MCF 10A (cell line): ENCODE measurements at regions of chr9 and their contacts with region 1.

Region 1: DNA sequence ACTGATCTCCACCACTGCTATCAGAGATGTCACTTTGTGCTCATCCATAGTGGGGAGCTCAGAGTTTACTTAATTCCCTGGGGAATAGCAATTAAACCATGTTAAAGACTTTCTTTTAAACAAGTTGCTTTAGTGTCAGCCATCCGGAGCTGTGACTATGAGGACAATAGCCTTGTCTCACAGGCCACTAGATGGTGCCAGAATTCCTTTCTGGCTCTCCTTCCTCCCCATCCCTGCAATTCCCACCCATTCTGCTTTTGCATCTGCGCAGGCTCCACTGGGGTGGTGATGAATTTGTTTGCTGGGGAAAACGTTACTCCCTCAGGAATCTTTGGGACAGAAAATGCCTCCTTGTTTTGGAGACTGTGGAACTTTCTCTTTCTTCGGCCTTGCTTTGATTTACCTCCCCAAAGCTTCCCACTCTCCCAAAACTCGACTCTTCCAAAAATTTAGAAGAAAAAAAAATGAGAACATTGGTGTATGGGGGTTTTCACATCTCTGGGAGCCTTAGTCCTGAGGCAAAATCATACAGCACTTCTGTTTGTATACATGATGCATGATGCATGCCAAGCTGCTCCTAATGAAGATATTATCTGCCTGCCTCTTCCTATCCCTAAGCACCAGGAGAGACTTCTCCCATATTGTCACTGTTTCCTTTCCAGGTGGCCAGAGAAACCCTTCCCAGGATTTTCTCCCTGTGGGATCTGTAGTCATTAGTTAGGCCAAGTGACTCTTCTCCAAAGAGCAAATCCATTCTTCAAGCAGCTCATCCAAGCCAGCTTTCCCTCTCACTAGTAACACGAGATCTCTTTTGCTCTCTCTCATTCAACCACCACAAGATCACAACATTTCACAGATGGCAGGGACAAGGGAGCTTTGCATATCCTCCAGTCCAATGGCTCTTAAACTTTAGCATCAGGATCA is 466.1 kb downstream of the TLR4 start:
- DNase-seq: peak; percentile 78
- H3K4me3 Mint-ChIP-seq: no peak overlapping the region
- H3K27ac Mint-ChIP-seq: no peak overlapping the region
- H3K4me1 Mint-ChIP-seq: no peaks in the 10 kb centered on the region
- H3K27me3 Mint-ChIP-seq: peaks cover 21% of the 10 kb centered on the region
- CTCF ChIP-seq: peak; percentile 73

Region 2: DNA sequence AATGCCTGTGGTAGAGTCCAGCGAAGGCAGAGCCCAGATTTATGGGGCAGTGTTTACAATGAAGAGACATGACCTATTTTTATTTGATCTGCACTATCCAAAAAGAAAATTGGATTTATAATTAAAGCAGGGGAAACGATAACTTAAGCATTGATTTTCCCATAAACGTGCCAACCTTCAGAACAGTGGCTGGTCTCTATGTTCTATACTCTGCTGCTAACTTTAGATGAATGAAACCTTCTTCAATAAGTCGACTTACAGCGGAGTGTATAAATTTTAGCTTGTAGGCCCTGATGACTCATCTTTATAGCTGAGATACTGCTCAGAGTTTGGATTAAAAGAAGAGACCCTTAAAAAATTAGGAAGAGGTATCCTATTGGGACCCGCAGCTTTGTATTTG is 13.4 kb before region 1 on chr9:
- CTCF ChIA-PET with region 1: interaction called, 29 read pairs
- POLR2A ChIA-PET with region 1: no interaction called
- intact Hi-C with region 1: no loop called
- DNase-seq: no peak
- H3K4me3 Mint-ChIP-seq: no peak overlapping the region
- H3K27ac Mint-ChIP-seq: no peak overlapping the region
- H3K4me1 Mint-ChIP-seq: no peaks in the 10 kb centered on the region
- H3K27me3 Mint-ChIP-seq: no peaks in the 10 kb centered on the region
- CTCF ChIP-seq: no peak

Region 3: DNA sequence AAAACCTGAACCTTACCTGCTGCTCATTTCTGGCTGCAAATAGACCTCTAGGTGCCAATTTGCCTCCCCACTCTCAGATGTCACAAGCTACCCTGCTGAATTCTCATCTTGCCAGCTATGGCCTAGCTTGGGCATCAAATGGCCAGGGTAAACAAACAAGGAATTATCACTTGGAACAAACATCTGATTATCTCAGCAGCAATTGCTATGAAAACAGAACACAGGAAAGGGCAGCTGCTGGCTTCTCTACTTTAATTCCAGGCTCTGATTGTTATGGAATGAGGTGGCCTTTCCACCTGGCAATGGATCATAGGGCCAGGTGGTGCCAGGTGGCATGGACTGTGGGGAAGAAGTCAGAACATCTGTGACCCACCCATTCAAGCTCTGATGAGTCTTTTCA is 39.0 kb after region 1 on chr9:
- CTCF ChIA-PET with region 1: no interaction called
- POLR2A ChIA-PET with region 1: no interaction called
- intact Hi-C with region 1: no loop called
- DNase-seq: no peak
- H3K4me3 Mint-ChIP-seq: no peak overlapping the region
- H3K27ac Mint-ChIP-seq: no peak overlapping the region
- H3K4me1 Mint-ChIP-seq: no peaks in the 10 kb centered on the region
- H3K27me3 Mint-ChIP-seq: no peaks in the 10 kb centered on the region
- CTCF ChIP-seq: no peak

Region 4: GRCh38 chr9:118362123-118362522 is 191.8 kb after region 1 on chr9:
- CTCF ChIA-PET with region 1: interaction called, 6 read pairs
- POLR2A ChIA-PET with region 1: no interaction called
- intact Hi-C with region 1: loop called (anchors 1 kb)
- DNase-seq: peak; percentile 57
- H3K4me3 Mint-ChIP-seq: no peak overlapping the region
- H3K27ac Mint-ChIP-seq: no peak overlapping the region
- H3K4me1 Mint-ChIP-seq: peaks cover 12% of the 10 kb centered on the region
- H3K27me3 Mint-ChIP-seq: no peaks in the 10 kb centered on the region
- CTCF ChIP-seq: no peak

Region 5: GRCh38 chr9:118595719-118596305 is 425.5 kb after region 1 on chr9:
- CTCF ChIA-PET with region 1: interaction called, 26 read pairs
- POLR2A ChIA-PET with region 1: no interaction called
- intact Hi-C with region 1: loop called (anchors 5 kb)
- DNase-seq: peak; percentile 73
- H3K4me3 Mint-ChIP-seq: no peak overlapping the region
- H3K27ac Mint-ChIP-seq: no peak overlapping the region
- H3K4me1 Mint-ChIP-seq: peaks cover 11% of the 10 kb centered on the region
- H3K27me3 Mint-ChIP-seq: no peaks in the 10 kb centered on the region
- CTCF ChIP-seq: peak; percentile 57

Region 6: DNA sequence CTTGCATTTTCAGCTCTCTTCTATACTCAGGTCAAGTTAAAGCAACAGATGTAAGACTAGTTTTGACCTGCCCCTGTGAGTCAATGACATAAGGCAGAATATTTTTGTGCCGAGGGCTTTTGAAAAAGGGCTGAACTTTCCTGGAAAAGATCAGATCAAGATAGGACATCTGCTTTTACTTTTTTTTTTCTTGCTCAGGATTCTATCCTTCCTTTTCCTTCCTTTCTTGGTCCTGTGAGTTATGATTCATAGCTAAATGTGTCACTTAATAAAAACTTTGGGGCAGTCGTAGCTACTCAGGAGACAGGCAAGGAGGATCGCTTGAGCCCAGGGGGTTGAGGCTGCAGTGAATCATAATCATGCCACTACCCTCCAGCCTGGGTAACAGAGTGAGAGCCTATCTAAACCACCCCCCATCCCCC is 1283.2 kb after region 1 on chr9:
- CTCF ChIA-PET with region 1: interaction called, 4 read pairs
- POLR2A ChIA-PET with region 1: no interaction called
- intact Hi-C with region 1: loop called (anchors 5 kb)
- DNase-seq: peak; percentile 66
- H3K4me3 Mint-ChIP-seq: peak overlapping the region; percentile 40
- H3K27ac Mint-ChIP-seq: peak overlapping the region; percentile 75
- H3K4me1 Mint-ChIP-seq: peaks cover 41% of the 10 kb centered on the region
- H3K27me3 Mint-ChIP-seq: no peaks in the 10 kb centered on the region
- CTCF ChIP-seq: no peak